Caco-2 (cell line): ENCODE measurements at regions of chr20 and their contacts with region 1.

Region 1: DNA sequence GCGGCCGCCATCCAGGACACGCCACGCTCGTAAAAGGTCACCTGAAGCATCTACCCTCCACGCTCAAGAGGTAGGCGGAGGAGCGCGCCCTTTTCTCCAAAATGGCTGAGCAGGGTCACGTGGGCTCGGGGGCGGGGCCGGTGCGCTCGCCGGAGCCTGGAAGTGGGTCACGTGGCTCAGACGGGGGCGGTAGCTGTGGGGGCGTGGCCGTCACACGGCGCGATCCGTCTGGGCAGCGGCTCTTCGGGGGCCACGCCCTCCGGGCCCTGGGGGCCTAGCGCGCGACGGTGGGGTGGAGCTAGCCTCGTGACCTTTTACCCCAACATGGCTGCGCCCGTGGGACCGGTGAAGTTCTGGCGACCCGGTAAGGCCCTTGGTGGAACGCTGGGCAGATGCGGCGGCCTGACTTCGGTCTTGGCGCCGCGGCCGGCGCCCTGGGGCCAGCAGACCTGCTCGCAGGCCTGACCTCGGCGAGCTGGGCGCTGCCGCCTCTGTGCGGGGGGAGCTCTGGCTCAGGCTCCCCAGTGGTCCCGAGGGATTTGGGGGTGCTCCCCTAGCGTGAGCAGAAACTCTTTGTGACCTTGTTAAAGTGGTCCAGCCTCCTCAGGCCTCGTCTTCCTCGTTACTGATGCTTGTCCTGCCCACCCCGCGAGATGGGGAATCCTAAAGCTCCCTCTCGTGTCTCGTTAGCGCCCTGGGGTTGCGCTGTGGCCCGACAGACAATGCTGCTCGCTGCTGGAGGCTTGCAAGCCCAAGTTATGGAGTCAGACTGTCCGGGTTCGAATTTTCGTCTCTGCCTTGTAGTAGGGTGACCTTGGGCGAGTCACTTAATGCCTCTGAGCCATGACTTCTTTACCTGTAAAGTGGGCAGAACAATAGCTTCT is at the start of gene DHX35:
- DNase-seq: peak; percentile 100
- H3K4me3 ChIP-seq: peak within 1 kb of the TSS; percentile 84
- H3K4me3 Mint-ChIP-seq: peak within 1 kb of the TSS; percentile 92
- H3K27ac Mint-ChIP-seq: peak within 1 kb of the TSS; percentile 96
- H3K4me1 ChIP-seq: peaks cover 14% of the 10 kb centered on the region; the same call in 1 of the 2 replicates
- H3K4me1 Mint-ChIP-seq: peaks cover 20% of the 10 kb centered on the region
- H3K27me3 ChIP-seq: no peaks in the 10 kb centered on the region
- H3K27me3 Mint-ChIP-seq: no peaks in the 10 kb centered on the region
- CTCF ChIP-seq: peak; percentile 30 to 76
- total RNA-seq, gene DHX35: 25.0 and 29.5 TPM in 2 replicates

Region 2: DNA sequence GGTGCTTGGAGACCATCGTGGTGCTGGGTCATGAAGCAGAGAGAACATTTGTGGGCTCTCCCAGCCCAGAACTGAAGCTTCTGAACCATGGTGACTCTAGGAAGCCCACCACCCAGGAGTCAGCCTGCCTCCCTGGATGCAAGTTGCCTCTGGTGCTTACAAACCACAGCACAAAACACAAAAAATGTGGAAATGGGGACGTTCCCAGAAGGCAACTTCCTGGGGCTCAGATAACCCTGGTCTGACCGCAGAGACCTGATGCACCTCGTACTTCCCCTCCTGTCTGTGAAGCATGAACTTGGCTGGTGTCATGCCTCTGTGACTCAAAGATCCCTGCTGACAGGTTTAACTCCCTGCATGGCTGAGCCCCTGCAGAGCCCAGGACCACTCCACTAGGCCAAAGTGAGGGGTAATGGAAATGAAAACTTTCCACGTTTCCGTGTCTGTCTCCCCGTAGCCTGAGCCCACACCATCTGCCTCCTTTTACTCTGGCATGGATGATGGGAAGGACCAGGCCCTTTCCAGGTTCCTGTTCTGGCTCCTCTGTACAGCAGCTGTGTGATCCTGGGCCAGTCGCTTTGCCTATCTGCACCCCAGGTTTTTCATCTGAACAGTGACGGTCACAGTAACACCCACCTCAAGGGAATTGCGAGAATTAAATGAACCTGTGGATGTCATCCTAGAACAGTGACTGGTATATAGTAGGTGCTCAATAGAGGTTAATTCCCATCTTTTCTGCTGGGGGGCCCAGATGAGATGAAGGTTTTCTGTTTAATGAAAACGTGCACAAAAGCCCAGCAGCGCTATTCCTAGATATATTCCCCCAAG is 99.0 kb before region 1 on chr20:
- CTCF ChIA-PET with region 1: interaction called, 8 read pairs
- POLR2A ChIA-PET with region 1: interaction called, 5 read pairs
- intact Hi-C with region 1: loop called (anchors 1 kb)
- DNase-seq: peak in 1 of 2 experiments; percentile 37
- H3K4me3 ChIP-seq: no peak overlapping the region
- H3K4me3 Mint-ChIP-seq: no peak overlapping the region
- H3K27ac Mint-ChIP-seq: no peak overlapping the region
- H3K4me1 ChIP-seq: no peaks in the 10 kb centered on the region
- H3K4me1 Mint-ChIP-seq: no peaks in the 10 kb centered on the region
- H3K27me3 ChIP-seq: 0 out of 2 replicates have a peak, but pooled peaks cover 2% of the 10 kb centered on the region
- H3K27me3 Mint-ChIP-seq: no peaks in the 10 kb centered on the region
- CTCF ChIP-seq: no peak

Region 3: DNA sequence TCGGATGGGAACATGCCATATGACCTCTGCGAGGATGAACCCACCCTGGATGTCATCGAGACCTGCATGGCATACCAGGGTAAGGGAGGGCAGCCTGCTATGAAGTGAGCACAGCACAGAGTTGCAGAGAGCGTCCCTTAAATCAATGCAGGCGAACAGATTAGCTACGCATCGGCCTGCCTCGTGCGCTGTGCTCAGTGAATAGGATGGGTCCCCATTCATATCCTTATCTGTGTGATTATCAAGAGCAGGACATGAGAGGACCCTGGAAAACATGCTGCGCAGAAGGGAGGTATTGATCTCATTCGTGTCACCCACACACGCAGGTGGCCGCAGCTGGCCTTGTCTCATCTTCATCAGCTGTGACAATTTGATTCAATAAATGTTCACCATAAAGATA is 61.7 kb before region 1 on chr20:
- CTCF ChIA-PET with region 1: interaction called, 11 read pairs
- POLR2A ChIA-PET with region 1: no interaction called
- intact Hi-C with region 1: loop called (anchors 2 kb)
- DNase-seq: no peak
- H3K4me3 ChIP-seq: no peak overlapping the region
- H3K4me3 Mint-ChIP-seq: no peak overlapping the region
- H3K27ac Mint-ChIP-seq: no peak overlapping the region
- H3K4me1 ChIP-seq: no peaks in the 10 kb centered on the region
- H3K4me1 Mint-ChIP-seq: no peaks in the 10 kb centered on the region
- H3K27me3 ChIP-seq: no peaks in the 10 kb centered on the region
- H3K27me3 Mint-ChIP-seq: peaks cover 12% of the 10 kb centered on the region
- CTCF ChIP-seq: no peak

Region 4: GRCh38 chr20:38919683-38920082 is 42.6 kb before region 1 on chr20:
- CTCF ChIA-PET with region 1: interaction called, 3 read pairs
- POLR2A ChIA-PET with region 1: interaction called, 15 read pairs
- intact Hi-C with region 1: no loop called
- DNase-seq: no peak
- H3K4me3 ChIP-seq: no peak overlapping the region
- H3K4me3 Mint-ChIP-seq: no peak overlapping the region
- H3K27ac Mint-ChIP-seq: no peak overlapping the region
- H3K4me1 ChIP-seq: peaks cover 8% of the 10 kb centered on the region
- H3K4me1 Mint-ChIP-seq: peaks cover 15% of the 10 kb centered on the region
- H3K27me3 ChIP-seq: no peaks in the 10 kb centered on the region
- H3K27me3 Mint-ChIP-seq: no peaks in the 10 kb centered on the region
- CTCF ChIP-seq: no peak

Region 5: GRCh38 chr20:38935285-38935684 is 27.0 kb before region 1 on chr20:
- CTCF ChIA-PET with region 1: interaction called, 5 read pairs
- POLR2A ChIA-PET with region 1: interaction called, 9 read pairs
- intact Hi-C with region 1: loop called (anchors 2 kb)
- DNase-seq: peak; percentile 27 to 43
- H3K4me3 ChIP-seq: no peak overlapping the region
- H3K4me3 Mint-ChIP-seq: no peak overlapping the region
- H3K27ac Mint-ChIP-seq: no peak overlapping the region
- H3K4me1 ChIP-seq: peaks cover 14% of the 10 kb centered on the region
- H3K4me1 Mint-ChIP-seq: peaks cover 33% of the 10 kb centered on the region
- H3K27me3 ChIP-seq: no peaks in the 10 kb centered on the region
- H3K27me3 Mint-ChIP-seq: no peaks in the 10 kb centered on the region
- CTCF ChIP-seq: peak; percentile 37

Region 6: GRCh38 chr20:38982316-38982715 is 20.0 kb after region 1 on chr20:
- CTCF ChIA-PET with region 1: interaction called, 3 read pairs
- POLR2A ChIA-PET with region 1: interaction called, 10 read pairs
- intact Hi-C with region 1: no loop called
- DNase-seq: no peak
- H3K4me3 ChIP-seq: no peak overlapping the region
- H3K4me3 Mint-ChIP-seq: no peak overlapping the region
- H3K27ac Mint-ChIP-seq: peak overlapping the region; percentile 36
- H3K4me1 ChIP-seq: peaks cover 15% of the 10 kb centered on the region
- H3K4me1 Mint-ChIP-seq: peaks cover 24% of the 10 kb centered on the region
- H3K27me3 ChIP-seq: no peaks in the 10 kb centered on the region
- H3K27me3 Mint-ChIP-seq: no peaks in the 10 kb centered on the region
- CTCF ChIP-seq: no peak